Prostate gland (tissue), 2 donors: ENCODE measurements at regions of chr18 and their contacts with region 1.

Region 1: DNA sequence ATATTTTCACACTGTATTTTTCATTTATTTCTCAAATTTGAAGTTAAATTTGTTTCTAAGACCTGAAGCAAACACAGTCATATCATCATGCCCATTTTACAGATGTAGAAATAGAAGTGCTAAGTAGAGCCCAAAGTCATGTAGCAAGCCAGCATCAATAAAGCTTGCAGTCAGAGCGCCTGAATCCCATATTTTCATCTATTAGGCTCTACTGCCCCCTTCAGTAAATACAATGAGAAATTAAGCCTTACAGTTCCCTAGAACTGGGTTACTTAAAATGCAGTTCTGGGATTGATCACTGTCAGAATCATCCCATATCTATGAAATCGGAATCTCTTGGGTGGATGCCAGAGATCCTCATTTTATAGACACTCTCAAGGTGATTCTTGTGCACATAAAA is 419.9 kb downstream of the TGIF1 start:
- DNase-seq: no peak
- H3K4me3 ChIP-seq: no peak overlapping the region
- H3K27ac ChIP-seq: no peak overlapping the region
- H3K4me1 ChIP-seq: no peaks in the 10 kb centered on the region
- H3K27me3 ChIP-seq: no peaks in the 10 kb centered on the region
- CTCF ChIP-seq: peak; percentile 15 to 63 (median 38)
- POLR2A ChIP-seq: no peak

Region 2: GRCh38 chr18:3983351-3983969 is 113.6 kb after region 1 on chr18:
- intact Hi-C with region 1: loop called (anchors 10 kb)
- DNase-seq: no peak
- H3K4me3 ChIP-seq: no peak overlapping the region
- H3K27ac ChIP-seq: no peak overlapping the region
- H3K4me1 ChIP-seq: no peaks in the 10 kb centered on the region
- H3K27me3 ChIP-seq: no peaks in the 10 kb centered on the region
- CTCF ChIP-seq: no peak
- POLR2A ChIP-seq: no peak